Pancreas (tissue), 10 donors: ENCODE measurements at regions of chr19 and their contacts with region 1.

Region 1: DNA sequence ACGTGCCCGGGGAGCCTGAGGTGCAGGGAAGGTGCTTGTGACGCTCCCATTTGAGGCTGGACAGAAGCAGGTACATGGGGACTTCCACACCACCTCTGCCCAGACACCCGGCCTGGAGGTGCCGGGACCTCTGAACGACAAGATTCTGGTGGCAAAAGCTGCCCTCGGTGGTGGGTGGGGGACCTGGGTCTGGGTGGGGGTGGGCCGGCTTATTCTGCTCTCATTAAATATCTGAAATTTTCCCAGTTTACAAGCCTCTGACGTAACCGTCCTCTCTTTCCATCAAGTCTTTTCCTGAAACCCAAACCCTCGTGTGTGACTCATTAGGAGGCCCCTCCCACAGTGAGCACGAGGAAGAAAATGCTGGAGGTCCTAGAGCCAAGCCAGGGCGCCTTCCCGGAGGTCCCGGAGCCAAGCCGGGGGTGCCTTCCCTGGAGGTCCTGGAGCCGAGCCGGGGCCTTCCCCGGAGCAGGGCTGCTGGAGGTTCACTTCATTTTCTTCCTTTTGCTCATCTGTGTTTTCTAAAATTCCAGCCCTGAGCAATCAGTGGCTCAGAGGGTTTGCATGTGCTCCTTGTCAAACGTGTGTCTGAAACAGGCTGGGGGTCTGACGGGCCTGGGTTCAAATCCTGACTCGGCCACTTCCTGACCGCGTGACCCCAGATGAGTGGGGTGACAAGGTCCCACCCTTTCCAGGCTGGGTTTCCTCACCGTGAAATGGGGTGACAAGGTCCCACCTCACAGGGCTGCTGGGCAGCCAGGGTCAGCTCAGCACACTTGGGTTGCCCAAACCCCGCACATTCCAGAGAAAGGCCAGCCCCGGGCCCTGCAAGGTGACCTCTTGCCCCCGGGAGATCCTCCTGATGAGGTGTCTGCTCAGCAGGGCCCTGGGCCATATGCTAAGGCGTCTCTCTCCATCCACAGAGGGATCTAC is 10.0 kb downstream of the CFD start:
- DNase-seq: peak in 1 of 6 donors; percentile 71
- ATAC-seq: peak in 3 of 4 donors; percentile 8 to 47 (median 42)
- H3K4me3 ChIP-seq: no peak overlapping the region
- H3K27ac ChIP-seq: no peak overlapping the region
- H3K4me1 ChIP-seq: no peaks in the 10 kb centered on the region
- H3K27me3 ChIP-seq: no peaks in the 10 kb centered on the region
- CTCF ChIP-seq: no peak

Region 2: GRCh38 chr19:796692-797527 is 72.6 kb before region 1 on chr19 and contains the start of gene PTBP1:
- intact Hi-C with region 1: no loop called
- DNase-seq: peak; percentile 97 to 100 (median 100)
- ATAC-seq: peak; percentile 83 to 88 (median 84)
- H3K4me3 ChIP-seq: peak within 1 kb of the TSS; percentile 82 to 95 (median 90)
- H3K27ac ChIP-seq: peak within 1 kb of the TSS; percentile 83 to 98 (median 96)
- H3K4me1 ChIP-seq: peaks cover 25 to 30% (median 27%) of the 10 kb centered on the region in 3 donors
- H3K27me3 ChIP-seq: no peaks in the 10 kb centered on the region
- CTCF ChIP-seq: no peak
- total RNA-seq, gene PTBP1: 83.3 to 160 (median 130) TPM

Region 3: DNA sequence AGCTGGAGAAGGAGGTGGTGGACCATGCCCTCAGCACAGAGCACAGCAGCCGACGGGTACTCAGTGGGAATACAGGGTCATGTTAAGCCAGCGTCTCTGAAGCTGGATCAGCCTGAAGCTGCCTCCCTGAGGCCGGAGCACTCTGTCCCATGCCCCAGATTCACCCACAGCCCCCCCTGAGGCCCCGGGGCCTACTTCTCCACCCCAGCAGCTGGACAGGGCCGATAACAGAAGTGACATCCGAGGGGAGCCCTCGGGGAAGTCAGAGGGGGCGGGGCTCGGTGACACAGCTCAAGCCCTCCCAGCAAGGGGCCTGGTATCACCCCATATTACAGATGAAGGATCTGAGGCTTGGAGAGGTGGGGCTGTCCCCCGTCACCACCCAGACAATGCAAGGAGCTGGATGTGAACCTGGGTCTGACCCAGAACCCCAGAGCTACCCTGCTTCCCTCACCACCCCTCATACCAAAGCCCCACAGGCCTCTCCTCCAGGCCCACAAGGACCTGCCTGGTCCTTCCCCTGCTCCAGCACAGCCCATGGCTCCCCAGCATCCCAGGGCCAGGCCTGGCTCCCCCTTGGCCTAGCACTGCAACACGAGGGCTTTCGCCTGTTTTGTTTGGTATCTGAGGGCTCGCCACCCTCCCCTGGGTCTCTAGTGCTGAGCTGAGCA is 37.8 kb after region 1 on chr19:
- intact Hi-C with region 1: loop called in 1 of 3 experiments (anchors 5 kb)
- DNase-seq: no peak
- ATAC-seq: no peak
- H3K4me3 ChIP-seq: no peak overlapping the region
- H3K27ac ChIP-seq: peak overlapping the region in 1 of 4 donors; percentile 12
- H3K4me1 ChIP-seq: peaks cover 0 to 17% (median 0%) of the 10 kb centered on the region in 3 donors
- H3K27me3 ChIP-seq: no peaks in the 10 kb centered on the region
- CTCF ChIP-seq: no peak

Region 4: GRCh38 chr19:913080-913748 is 43.7 kb after region 1 on chr19 and contains the start of gene R3HDM4:
- intact Hi-C with region 1: loop called in 2 of 3 experiments (anchors 5 kb)
- DNase-seq: peak; percentile 74 to 94 (median 84)
- ATAC-seq: peak; percentile 75 to 86 (median 79)
- H3K4me3 ChIP-seq: peak within 1 kb of the TSS; percentile 57 to 71 (median 66)
- H3K27ac ChIP-seq: peak within 1 kb of the TSS; percentile 70 to 92 (median 85)
- H3K4me1 ChIP-seq: peaks cover 8 to 29% (median 15%) of the 10 kb centered on the region in 3 donors
- H3K27me3 ChIP-seq: peaks cover 0 to 3% (median 0%) of the 10 kb centered on the region in 4 donors
- CTCF ChIP-seq: no peak
- total RNA-seq, gene R3HDM4: 21.6 to 36.7 (median 29.2) TPM

Region 5: GRCh38 chr19:973726-974562 is 104.4 kb after region 1 on chr19:
- intact Hi-C with region 1: no loop called
- DNase-seq: peak in 2 of 6 donors; percentile 22 to 67
- ATAC-seq: no peak
- H3K4me3 ChIP-seq: no peak overlapping the region
- H3K27ac ChIP-seq: no peak overlapping the region
- H3K4me1 ChIP-seq: no peaks in the 10 kb centered on the region
- H3K27me3 ChIP-seq: no peaks in the 10 kb centered on the region
- CTCF ChIP-seq: no peak